ENCODE measurements at regions of chr1 and their contacts with region 1.

Region 1: GRCh38 chr1:167401260-167401873 is 117.0 kb downstream of the CD247 start:
- DNase-seq: peak in 2 of 5 donors; percentile 22 to 25
- H3K4me3 ChIP-seq: no peak overlapping the region
- H3K27ac ChIP-seq: no peak overlapping the region
- H3K4me1 ChIP-seq: no peaks in the 10 kb centered on the region
- H3K27me3 ChIP-seq: no peaks in the 10 kb centered on the region
- CTCF ChIP-seq: peak in 1 of 3 donors; percentile 10
- EP300 ChIP-seq: no peak
- POLR2A ChIP-seq: no peak

Region 2: GRCh38 chr1:167297222-167298214 is 103.8 kb before region 1 on chr1:
- intact Hi-C with region 1: no loop called
- DNase-seq: no peak
- H3K4me3 ChIP-seq: no peak overlapping the region
- H3K27ac ChIP-seq: no peak overlapping the region
- H3K4me1 ChIP-seq: no peaks in the 10 kb centered on the region
- H3K27me3 ChIP-seq: no peaks in the 10 kb centered on the region
- CTCF ChIP-seq: no peak
- EP300 ChIP-seq: no peak
- POLR2A ChIP-seq: no peak

Region 3: GRCh38 chr1:167533851-167534300 is 132.5 kb after region 1 on chr1:
- intact Hi-C with region 1: loop called in 1 of 4 experiments (anchors 10 kb)
- DNase-seq: peak; percentile 39 to 75 (median 64)
- H3K4me3 ChIP-seq: no peak overlapping the region
- H3K27ac ChIP-seq: no peak overlapping the region
- H3K4me1 ChIP-seq: no peaks in the 10 kb centered on the region
- H3K27me3 ChIP-seq: no peaks in the 10 kb centered on the region
- CTCF ChIP-seq: peak; percentile 27 to 57 (median 54)
- EP300 ChIP-seq: no peak
- POLR2A ChIP-seq: no peak